A673 (cell line): ENCODE measurements at regions of chr6 and their contacts with region 1.

Region 1: DNA sequence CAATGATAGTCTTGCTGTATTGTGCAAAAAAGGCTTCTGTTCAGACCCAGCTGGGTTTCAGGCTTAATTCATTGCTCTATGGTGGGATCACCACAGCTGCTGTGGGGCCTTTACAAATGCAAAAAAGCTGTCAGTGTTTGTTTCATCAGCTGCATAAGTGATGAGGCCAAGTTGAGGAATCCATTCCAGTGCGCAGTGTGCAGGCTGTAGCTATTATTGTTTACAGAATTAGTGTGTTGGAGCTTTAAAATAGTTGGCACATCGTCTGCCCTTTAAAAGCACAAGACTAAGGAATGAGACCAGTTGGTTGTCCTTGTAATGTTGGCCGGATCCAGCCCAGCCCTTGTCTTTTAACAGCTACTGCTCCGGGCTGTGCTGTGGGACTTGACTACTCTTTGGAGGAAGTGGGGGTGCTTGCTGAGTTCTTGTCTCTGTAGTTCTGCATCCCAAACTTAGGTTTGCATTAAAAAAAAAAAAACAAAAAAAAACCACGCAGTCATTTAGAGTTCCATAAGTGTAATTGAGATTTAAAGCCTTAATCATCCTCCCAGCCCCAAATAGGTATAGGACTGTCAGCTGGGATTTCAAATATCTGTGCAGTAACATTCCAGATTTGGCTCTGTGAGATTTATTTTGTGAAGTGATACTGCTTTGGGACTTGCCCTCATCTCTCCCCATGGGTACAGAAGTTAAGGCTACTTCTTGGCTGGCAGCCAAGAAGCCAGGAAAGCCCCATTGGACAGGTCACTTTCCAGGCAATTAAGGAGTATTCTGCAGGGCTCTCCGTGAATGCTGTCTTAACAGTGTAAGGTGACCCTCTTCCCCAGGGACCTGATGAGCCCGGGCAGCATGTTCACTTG is 19.3 kb downstream of the JARID2 start:
- DNase-seq: peak; percentile 91
- H3K4me3 ChIP-seq: peak overlapping the region; percentile 22
- H3K27ac ChIP-seq: peak overlapping the region; percentile 28
- H3K4me1 ChIP-seq: peaks cover 82% of the 10 kb centered on the region
- H3K27me3 ChIP-seq: no peaks in the 10 kb centered on the region
- CTCF ChIP-seq: no peak

Region 2: DNA sequence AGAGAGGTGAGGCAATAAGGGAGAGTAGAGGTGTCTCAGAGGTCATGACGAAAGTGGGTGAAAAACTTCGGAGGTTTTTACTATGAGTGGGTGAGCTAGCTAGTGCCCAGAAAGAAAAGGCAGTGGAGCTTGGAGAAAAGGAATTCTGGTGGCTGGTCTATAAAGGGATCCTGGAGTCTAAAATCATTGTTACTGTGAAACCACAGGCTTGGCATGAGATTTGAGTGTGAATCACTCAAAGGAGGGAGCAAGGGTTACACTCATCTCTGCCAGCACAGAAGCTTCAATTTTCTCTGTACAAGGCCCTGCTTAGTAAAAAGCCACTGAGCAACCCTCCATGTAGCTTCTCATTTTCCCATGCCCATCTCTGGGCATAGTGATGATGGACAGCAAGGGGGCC is 1100.0 kb before region 1 on chr6:
- CTCF ChIA-PET with region 1: no interaction called
- POLR2A ChIA-PET with region 1: interaction called, 12 read pairs
- intact Hi-C with region 1: no loop called
- DNase-seq: no peak
- H3K4me3 ChIP-seq: no peak overlapping the region
- H3K27ac ChIP-seq: no peak overlapping the region
- H3K4me1 ChIP-seq: no peaks in the 10 kb centered on the region
- H3K27me3 ChIP-seq: no peaks in the 10 kb centered on the region
- CTCF ChIP-seq: no peak

Region 3: DNA sequence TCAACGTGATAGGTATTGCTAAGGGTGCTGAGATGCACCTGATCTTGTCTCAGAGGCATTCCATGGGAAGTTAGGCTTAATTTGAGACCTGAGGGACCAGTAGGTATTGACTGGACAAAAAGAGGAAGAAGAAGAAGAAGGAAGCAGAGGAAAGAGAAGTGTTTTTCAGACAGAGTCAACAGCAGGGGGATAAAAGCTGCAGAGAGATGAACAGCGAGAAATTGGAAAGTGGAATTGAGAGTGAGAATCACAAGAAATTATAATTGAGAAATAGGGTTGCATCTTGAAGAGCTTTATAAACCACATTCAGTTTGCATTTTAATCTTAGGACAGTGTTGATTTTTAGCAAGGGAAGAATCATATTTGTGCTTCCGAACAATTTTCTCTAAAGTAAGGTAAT is 893.6 kb before region 1 on chr6:
- CTCF ChIA-PET with region 1: no interaction called
- POLR2A ChIA-PET with region 1: no interaction called
- intact Hi-C with region 1: no loop called
- DNase-seq: no peak
- H3K4me3 ChIP-seq: no peak overlapping the region
- H3K27ac ChIP-seq: no peak overlapping the region
- H3K4me1 ChIP-seq: peaks cover 17% of the 10 kb centered on the region
- H3K27me3 ChIP-seq: no peaks in the 10 kb centered on the region
- CTCF ChIP-seq: no peak

Region 4: DNA sequence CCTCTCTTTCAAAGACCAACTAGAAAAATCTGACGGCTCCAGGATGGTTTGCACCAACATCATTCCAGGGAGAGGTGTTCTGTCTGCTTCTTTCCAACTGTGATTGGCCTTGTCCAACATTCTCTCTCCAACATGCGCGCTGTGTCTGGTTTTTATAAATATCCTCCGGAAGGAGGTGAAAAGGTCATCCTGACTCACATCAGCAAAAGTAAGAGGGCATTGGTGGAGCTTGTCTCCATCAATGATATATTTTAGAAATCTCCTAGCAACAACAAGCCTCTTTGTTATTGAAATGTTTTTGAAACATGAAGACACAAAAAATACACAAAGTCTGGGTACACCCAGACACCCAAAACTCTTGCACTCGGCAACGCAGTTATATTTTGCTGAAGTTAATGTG is 494.6 kb before region 1 on chr6:
- CTCF ChIA-PET with region 1: no interaction called
- POLR2A ChIA-PET with region 1: no interaction called
- intact Hi-C with region 1: no loop called
- DNase-seq: no peak
- H3K4me3 ChIP-seq: no peak overlapping the region
- H3K27ac ChIP-seq: no peak overlapping the region
- H3K4me1 ChIP-seq: peaks cover 19% of the 10 kb centered on the region
- H3K27me3 ChIP-seq: no peaks in the 10 kb centered on the region
- CTCF ChIP-seq: no peak

Region 5: DNA sequence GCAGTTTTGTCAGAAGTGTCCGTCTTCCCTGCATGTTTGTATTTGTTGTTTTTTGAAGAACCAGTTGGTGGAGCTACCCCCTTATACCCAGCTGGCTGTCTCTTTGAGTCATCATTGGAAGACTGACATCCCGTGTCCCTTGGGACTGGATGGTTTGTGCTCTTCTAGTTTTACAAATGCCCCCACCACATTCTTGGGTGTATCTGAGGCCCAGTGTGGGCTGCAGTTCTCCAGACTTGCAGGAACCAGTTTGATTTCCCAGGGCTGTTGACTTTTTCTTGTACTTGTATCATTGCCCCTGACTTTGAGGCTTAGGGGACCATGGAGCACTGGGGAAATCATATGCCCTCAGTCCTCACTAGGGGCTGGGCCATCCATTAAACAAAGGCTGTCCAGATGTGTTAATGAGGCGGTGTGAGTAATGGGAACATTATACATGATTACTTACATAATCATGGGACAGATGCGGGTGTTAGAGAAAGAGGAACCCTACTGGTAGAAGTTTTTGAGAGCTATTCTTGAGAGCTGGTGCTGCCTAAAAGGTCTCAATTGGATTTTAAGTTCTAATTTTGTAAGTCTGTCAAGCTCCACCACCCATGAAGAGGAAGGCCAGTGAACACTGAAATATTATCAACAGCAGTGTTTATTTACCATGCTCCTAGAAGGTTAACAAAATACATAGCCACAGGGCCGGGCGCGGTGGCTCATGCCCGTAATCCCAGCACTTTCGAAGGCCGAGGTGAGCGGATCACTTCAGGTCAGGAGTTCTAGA is 10.9 kb before region 1 on chr6:
- CTCF ChIA-PET with region 1: interaction called, 18 read pairs
- POLR2A ChIA-PET with region 1: no interaction called
- intact Hi-C with region 1: no loop called
- DNase-seq: peak; percentile 96
- H3K4me3 ChIP-seq: no peak overlapping the region
- H3K27ac ChIP-seq: peak overlapping the region; percentile 5
- H3K4me1 ChIP-seq: peaks cover 94% of the 10 kb centered on the region
- H3K27me3 ChIP-seq: no peaks in the 10 kb centered on the region
- CTCF ChIP-seq: peak; percentile 56

Region 6: GRCh38 chr6:15305496-15305895 is 40.4 kb after region 1 on chr6:
- CTCF ChIA-PET with region 1: no interaction called
- POLR2A ChIA-PET with region 1: no interaction called
- intact Hi-C with region 1: loop called (anchors 5 kb)
- DNase-seq: no peak
- H3K4me3 ChIP-seq: no peak overlapping the region
- H3K27ac ChIP-seq: no peak overlapping the region
- H3K4me1 ChIP-seq: peaks cover 58% of the 10 kb centered on the region
- H3K27me3 ChIP-seq: no peaks in the 10 kb centered on the region
- CTCF ChIP-seq: no peak

Region 7: GRCh38 chr6:15365273-15365687 is 100.1 kb after region 1 on chr6:
- CTCF ChIA-PET with region 1: no interaction called
- POLR2A ChIA-PET with region 1: interaction called, 3 read pairs
- intact Hi-C with region 1: loop called (anchors 2 kb)
- DNase-seq: peak; percentile 98
- H3K4me3 ChIP-seq: peak overlapping the region; percentile 13
- H3K27ac ChIP-seq: no peak overlapping the region
- H3K4me1 ChIP-seq: peaks cover 76% of the 10 kb centered on the region
- H3K27me3 ChIP-seq: no peaks in the 10 kb centered on the region
- CTCF ChIP-seq: no peak

Region 8: DNA sequence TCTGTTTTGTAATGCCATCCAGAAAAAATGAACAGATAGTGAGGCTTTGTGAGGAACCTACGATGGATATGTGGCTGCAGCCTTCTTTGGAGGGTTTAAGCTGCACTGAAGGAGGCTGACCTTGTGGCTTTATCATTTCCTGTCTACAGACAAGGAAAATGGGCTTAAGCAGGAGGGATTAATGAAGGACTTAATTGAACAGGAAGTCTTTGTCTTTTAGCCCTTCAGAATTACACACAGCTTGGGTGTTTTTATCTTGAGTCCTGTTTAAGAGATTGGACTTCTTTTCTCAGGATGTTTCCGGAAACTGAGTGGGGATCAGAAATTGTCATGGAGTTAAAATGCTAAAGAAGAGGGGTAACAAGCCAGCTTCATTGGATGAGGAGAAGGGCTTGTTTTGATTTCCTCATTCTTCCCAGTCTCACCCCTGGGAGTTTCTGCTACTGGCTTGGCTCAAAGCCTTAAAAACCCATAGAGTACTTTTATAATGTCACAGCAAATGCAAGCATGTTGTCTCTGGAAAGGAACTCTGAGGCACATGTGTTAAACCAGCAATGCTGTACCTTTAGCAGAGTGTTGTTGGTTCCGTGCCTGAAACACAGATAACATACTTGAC is 174.4 kb after region 1 on chr6:
- CTCF ChIA-PET with region 1: interaction called, 4 read pairs
- POLR2A ChIA-PET with region 1: no interaction called
- intact Hi-C with region 1: loop called (anchors 5 kb)
- DNase-seq: peak; percentile 98
- H3K4me3 ChIP-seq: no peak overlapping the region
- H3K27ac ChIP-seq: peak overlapping the region; percentile 20
- H3K4me1 ChIP-seq: peaks cover 81% of the 10 kb centered on the region
- H3K27me3 ChIP-seq: peaks cover 20% of the 10 kb centered on the region
- CTCF ChIP-seq: no peak

Region 9: DNA sequence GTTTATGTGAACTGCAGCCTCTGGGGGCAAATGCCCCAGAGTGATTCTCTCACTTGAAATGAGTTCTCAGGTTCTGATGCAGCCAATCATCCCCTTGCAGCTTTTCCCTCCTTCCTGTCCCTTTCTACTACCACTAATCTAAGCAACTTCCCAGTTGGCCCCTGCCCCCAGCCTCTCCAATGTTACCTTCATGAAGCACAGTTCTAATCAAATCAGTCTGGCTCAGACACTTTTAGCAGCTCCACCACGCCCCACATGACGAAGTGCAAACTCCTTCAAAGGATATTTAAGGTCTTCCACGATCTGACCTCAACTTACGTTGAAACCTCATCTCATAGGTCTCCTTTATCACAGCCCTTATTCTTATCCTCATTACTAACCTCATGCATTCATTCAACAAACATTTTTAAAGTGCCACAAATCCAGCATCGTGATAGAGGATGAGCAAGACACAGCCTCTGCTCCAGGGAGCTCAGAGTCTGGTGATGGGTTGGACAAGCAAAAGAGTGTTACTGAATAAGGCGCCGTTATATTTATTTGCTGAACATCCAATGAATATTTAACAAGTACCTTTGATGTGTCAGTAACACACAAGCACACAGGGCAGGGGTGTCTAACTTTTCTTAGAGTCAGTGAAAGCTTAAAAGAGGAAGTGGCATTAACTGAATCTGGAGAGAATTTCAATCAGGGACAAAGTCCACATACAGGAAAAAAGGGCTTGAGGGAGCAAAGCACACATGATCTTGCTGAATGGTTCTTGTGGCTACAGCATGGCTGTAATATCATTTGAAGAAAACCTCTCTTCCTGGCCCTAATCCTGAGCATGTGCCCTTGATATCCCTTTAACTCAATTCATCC is 418.1 kb after region 1 on chr6:
- CTCF ChIA-PET with region 1: no interaction called
- POLR2A ChIA-PET with region 1: no interaction called
- intact Hi-C with region 1: no loop called
- DNase-seq: no peak
- H3K4me3 ChIP-seq: no peak overlapping the region
- H3K27ac ChIP-seq: no peak overlapping the region
- H3K4me1 ChIP-seq: no peaks in the 10 kb centered on the region
- H3K27me3 ChIP-seq: no peaks in the 10 kb centered on the region
- CTCF ChIP-seq: no peak